Activated CD4-positive, alpha-beta memory T cell treated with anti-CD3 and anti-CD28 coated beads for 36 hours (primary cell): ENCODE measurements at regions of chr9 and their contacts with region 1.

Region 1: GRCh38 chr9:79571309-79572031 is at the start of gene TLE4:
- DNase-seq: peak; percentile 100
- H3K4me3 Mint-ChIP-seq: peak within 1 kb of the TSS; percentile 72
- H3K27ac Mint-ChIP-seq: peak within 1 kb of the TSS; percentile 56
- H3K4me1 Mint-ChIP-seq: peaks cover 29% of the 10 kb centered on the region
- H3K27me3 Mint-ChIP-seq: peaks cover 6% of the 10 kb centered on the region
- total RNA-seq, gene TLE4: 14.3 to 15.3 TPM

Region 2: DNA sequence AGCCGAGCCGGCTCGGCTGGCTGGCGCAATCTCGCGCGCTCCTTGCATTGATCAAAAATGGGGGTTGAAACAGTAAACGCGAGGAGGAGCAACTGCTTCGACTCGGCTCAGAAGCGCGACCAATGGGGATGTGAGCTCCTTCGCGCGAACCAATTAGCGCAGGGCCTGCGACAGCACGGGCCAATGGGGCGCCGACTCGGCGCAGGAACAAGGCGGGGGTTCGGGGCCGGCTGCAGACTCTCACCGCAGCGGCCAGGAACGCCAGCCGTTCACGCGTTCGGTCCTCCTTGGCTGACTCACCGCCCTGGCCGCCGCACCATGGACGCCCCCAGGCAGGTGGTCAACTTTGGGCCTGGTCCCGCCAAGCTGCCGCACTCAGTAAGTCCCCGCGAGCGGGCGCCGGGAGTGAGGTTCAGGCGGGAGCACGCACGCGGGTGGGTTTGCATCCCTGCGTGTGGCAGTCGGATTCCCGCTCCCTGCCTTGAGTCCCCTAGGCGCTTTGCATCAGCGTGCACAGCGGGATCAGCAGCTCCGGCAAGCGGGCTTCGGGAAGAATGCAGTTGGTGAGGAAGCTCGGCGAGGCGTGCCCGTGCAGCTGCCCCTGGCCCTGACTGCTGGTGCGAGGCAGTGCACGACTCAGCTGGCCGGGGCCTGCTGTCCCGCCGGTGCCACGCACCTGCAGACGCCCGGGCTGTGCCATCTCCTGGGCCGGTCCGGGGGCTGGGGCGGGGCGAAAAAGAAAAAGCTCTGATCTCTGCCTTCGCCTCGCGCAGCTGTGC is 1274.4 kb before region 1 on chr9 and contains the start of gene PSAT1:
- CTCF ChIA-PET with region 1: no interaction called
- POLR2A ChIA-PET with region 1: no interaction called
- intact Hi-C with region 1: loop called (anchors 2 kb)
- DNase-seq: peak; percentile 96
- H3K4me3 Mint-ChIP-seq: peak within 1 kb of the TSS; percentile 89
- H3K27ac Mint-ChIP-seq: peak within 1 kb of the TSS; percentile 87
- H3K4me1 Mint-ChIP-seq: peaks cover 44% of the 10 kb centered on the region
- H3K27me3 Mint-ChIP-seq: no peaks in the 10 kb centered on the region
- total RNA-seq, gene PSAT1: 132 to 137 TPM

Region 3: DNA sequence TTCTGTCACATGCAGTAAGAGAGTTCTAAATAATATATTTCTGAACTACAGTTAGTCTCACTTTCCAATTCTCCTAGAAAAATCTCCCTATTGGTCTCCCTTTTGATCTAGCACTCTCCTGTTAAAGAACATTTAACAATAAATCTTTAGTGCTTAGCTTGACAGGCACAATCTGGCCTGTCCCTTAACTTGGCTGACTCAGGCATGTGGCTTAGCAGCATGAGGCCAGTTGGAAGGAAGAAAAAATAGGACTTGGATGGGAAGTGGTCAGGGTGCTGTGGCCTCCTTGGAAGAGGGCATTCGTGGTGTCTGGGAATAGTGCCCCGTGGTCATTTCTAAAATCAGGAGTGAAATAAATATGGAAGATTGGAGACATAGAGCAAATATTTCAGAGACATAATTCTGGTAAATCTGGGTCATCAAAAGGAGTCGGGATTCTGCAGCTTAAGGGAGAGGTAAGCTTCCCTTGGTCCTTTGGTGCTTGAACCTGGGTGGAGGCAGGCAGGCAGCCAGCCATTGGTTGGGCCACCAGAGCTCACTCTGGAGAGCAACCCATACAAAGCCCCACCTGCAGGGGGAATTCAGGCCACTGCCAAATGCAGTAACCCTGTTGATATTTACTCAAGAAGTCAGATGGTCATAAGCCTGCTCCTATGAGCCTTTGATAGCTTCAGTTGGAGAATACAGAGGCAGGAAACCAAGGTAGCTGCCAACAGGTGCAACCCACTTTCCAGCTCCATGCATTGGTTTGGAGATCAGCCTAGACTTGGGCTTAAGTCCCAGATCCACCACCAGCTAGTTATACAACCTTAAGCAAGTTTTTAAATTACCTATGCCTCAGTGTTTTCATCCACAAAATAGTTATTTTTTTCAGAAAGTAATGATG is 28.5 kb before region 1 on chr9:
- CTCF ChIA-PET with region 1: no interaction called
- POLR2A ChIA-PET with region 1: no interaction called
- intact Hi-C with region 1: loop called (anchors 1 kb)
- DNase-seq: no peak
- H3K4me3 Mint-ChIP-seq: no peak overlapping the region
- H3K27ac Mint-ChIP-seq: no peak overlapping the region
- H3K4me1 Mint-ChIP-seq: peaks cover 21% of the 10 kb centered on the region
- H3K27me3 Mint-ChIP-seq: peaks cover 8% of the 10 kb centered on the region

Region 4: GRCh38 chr9:79623799-79624721 is 52.6 kb after region 1 on chr9:
- CTCF ChIA-PET with region 1: no interaction called
- POLR2A ChIA-PET with region 1: interaction called, 12 read pairs
- intact Hi-C with region 1: loop called (anchors 1 kb)
- DNase-seq: peak; percentile 47
- H3K4me3 Mint-ChIP-seq: peak overlapping the region; percentile 22
- H3K27ac Mint-ChIP-seq: peak overlapping the region; percentile 81
- H3K4me1 Mint-ChIP-seq: peaks cover 44% of the 10 kb centered on the region
- H3K27me3 Mint-ChIP-seq: no peaks in the 10 kb centered on the region

Region 5: GRCh38 chr9:79817438-79818004 is 246.1 kb after region 1 on chr9:
- CTCF ChIA-PET with region 1: no interaction called
- POLR2A ChIA-PET with region 1: interaction called, 3 read pairs
- intact Hi-C with region 1: loop called (anchors 2 kb)
- DNase-seq: peak; percentile 37
- H3K4me3 Mint-ChIP-seq: no peak overlapping the region
- H3K27ac Mint-ChIP-seq: no peak overlapping the region
- H3K4me1 Mint-ChIP-seq: peaks cover 19% of the 10 kb centered on the region
- H3K27me3 Mint-ChIP-seq: peaks cover 15% of the 10 kb centered on the region